ENCODE measurements at regions of chr15 and their contacts with region 1.

Region 1: GRCh38 chr15:80374441-80374840 is 29.7 kb upstream of the ARNT2 start:
- DNase-seq: no peak
- H3K4me3 ChIP-seq: no peak overlapping the region
- H3K27ac ChIP-seq: no peak overlapping the region
- H3K4me1 ChIP-seq: no peaks in the 10 kb centered on the region
- H3K27me3 ChIP-seq: peaks cover 57% of the 10 kb centered on the region
- CTCF ChIP-seq: no peak

Region 2: DNA sequence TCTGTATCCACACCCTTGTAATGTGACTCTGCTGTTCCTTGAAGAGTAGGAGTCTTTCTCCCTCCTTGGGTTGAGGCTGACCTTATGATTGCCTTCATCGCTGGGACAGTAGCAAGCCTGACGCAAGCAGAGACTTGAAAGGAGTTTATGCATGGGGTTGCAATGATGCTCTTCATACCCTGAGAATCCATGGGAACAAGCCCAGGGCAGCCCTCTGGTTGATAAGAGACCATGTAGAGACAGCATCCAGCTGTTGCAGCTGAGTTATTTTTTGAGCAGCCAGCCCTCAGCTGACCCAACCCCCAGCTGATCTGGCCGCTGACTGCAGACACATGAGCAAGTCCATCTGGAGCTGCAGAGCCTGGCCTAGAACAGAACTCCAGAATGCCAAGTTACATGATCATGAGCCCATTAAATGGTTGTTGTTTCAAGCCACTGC is 30.9 kb before region 1 on chr15:
- CTCF ChIA-PET with region 1: no interaction called
- POLR2A ChIA-PET with region 1: no interaction called
- intact Hi-C with region 1: loop called (anchors 1 kb)
- DNase-seq: no peak
- H3K4me3 ChIP-seq: no peak overlapping the region
- H3K27ac ChIP-seq: no peak overlapping the region
- H3K4me1 ChIP-seq: no peaks in the 10 kb centered on the region
- H3K27me3 ChIP-seq: peaks cover 79% of the 10 kb centered on the region
- CTCF ChIP-seq: no peak

Region 3: GRCh38 chr15:80455668-80456442 is 81.4 kb after region 1 on chr15:
- CTCF ChIA-PET with region 1: no interaction called
- POLR2A ChIA-PET with region 1: no interaction called
- intact Hi-C with region 1: no loop called
- DNase-seq: peak; percentile 67 to 92
- H3K4me3 ChIP-seq: no peak overlapping the region
- H3K27ac ChIP-seq: peak overlapping the region; percentile 33; the same call in 1 of the 2 replicates
- H3K4me1 ChIP-seq: peaks cover 23% of the 10 kb centered on the region
- H3K27me3 ChIP-seq: no peaks in the 10 kb centered on the region
- CTCF ChIP-seq: peak; percentile 94